Activated CD8-positive, alpha-beta T cell treated with anti-CD3 and anti-CD28 coated beads, Interleukin-2, amount 10 ng/mL, durations not matched to agents 7 days and 5 days (primary cell): ENCODE measurements at regions of chr2 and their contacts with region 1.

Region 1: GRCh38 chr2:101349893-101350662 is 37.2 kb downstream of the CREG2 start:
- DNase-seq: no peak
- ATAC-seq: no peak
- H3K4me3 Mint-ChIP-seq: no peak overlapping the region
- H3K27ac Mint-ChIP-seq: no peak overlapping the region
- H3K4me1 Mint-ChIP-seq: no peaks in the 10 kb centered on the region
- H3K27me3 Mint-ChIP-seq: peaks cover 2% of the 10 kb centered on the region

Region 2: GRCh38 chr2:101361121-101361870 is 11.2 kb after region 1 on chr2:
- CTCF ChIA-PET with region 1: interaction called, 18 read pairs
- POLR2A ChIA-PET with region 1: interaction called, 3 read pairs
- DNase-seq: peak; percentile 55
- ATAC-seq: peak; percentile 76
- H3K4me3 Mint-ChIP-seq: no peak overlapping the region
- H3K27ac Mint-ChIP-seq: peak overlapping the region; percentile 81
- H3K4me1 Mint-ChIP-seq: peaks cover 27% of the 10 kb centered on the region
- H3K27me3 Mint-ChIP-seq: peaks cover 19% of the 10 kb centered on the region

Region 3: DNA sequence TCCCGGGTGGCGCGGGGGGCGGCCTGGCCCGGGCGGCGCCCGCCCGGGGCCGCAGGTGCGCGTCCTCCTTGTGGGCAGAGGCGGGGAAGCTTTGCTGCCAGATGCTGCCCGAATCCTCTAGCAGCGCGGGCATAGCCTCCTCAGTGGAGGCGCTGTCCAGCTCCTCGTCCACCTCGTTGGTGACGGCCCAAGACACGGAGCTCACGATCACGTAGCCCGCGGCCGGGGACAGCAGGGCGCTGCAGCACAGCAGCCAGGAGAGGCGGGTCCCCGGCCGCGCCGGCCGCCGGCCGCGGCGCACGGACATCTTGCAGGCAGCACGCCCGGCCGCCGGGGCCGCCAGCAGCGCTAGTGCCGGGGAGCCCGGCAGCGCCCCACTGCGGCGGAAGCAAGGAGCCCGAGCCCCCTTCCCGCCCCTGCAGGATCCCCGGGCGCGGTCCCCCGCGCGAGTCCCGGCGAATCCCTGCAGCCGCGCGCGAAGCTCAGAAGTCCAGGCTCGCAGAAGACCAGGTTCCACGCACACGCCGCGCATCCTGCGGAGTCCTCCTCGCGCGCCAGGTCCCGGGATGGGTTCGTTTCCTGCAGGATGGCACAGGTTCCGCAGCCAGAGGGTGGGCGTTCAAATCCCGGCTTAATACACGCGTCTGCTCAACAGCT is 37.2 kb after region 1 on chr2 and contains the start of gene CREG2:
- CTCF ChIA-PET with region 1: interaction called, 27 read pairs
- POLR2A ChIA-PET with region 1: no interaction called
- DNase-seq: peak; percentile 62
- ATAC-seq: peak; percentile 89
- H3K4me3 Mint-ChIP-seq: peak within 1 kb of the TSS; percentile 52
- H3K27ac Mint-ChIP-seq: no peak within 1 kb of the TSS
- H3K4me1 Mint-ChIP-seq: peaks cover 11% of the 10 kb centered on the region
- H3K27me3 Mint-ChIP-seq: peaks cover 58% of the 10 kb centered on the region
- total RNA-seq, gene CREG2: not detected

Region 4: GRCh38 chr2:101446869-101447268 is 96.8 kb after region 1 on chr2:
- CTCF ChIA-PET with region 1: no interaction called
- POLR2A ChIA-PET with region 1: no interaction called
- DNase-seq: no peak
- ATAC-seq: no peak
- H3K4me3 Mint-ChIP-seq: no peak overlapping the region
- H3K27ac Mint-ChIP-seq: no peak overlapping the region
- H3K4me1 Mint-ChIP-seq: peaks cover 24% of the 10 kb centered on the region
- H3K27me3 Mint-ChIP-seq: peaks cover 4% of the 10 kb centered on the region

Region 5: DNA sequence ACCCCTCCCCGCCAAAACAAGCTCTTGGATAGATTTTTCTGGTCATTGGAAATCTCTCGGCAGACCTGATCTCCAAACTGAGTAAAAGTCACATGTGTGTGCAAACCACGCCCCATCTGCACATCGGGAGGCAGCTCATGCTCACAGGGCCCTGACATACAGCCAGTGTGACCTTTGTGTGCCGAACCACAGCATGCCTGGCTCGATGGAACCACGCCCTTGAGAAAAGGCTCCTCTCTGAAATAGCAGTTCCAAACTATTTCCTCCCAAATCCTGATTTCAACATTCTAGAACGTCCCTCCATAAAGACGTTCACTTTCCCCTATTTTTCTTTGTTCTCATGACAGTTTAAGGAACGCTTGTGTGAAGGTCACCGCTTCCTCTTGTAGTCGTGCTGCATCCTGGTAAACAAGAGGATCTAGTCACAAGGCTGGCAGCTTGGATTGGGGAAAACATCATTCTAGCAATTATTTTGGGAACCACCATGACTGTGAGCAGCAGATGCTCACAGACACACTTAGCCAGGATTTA is 288.2 kb after region 1 on chr2:
- CTCF ChIA-PET with region 1: no interaction called
- POLR2A ChIA-PET with region 1: no interaction called
- DNase-seq: no peak
- ATAC-seq: no peak
- H3K4me3 Mint-ChIP-seq: no peak overlapping the region
- H3K27ac Mint-ChIP-seq: no peak overlapping the region
- H3K4me1 Mint-ChIP-seq: no peaks in the 10 kb centered on the region
- H3K27me3 Mint-ChIP-seq: no peaks in the 10 kb centered on the region